ENCODE measurements at regions of chr14 and their contacts with region 1.

Region 1: DNA sequence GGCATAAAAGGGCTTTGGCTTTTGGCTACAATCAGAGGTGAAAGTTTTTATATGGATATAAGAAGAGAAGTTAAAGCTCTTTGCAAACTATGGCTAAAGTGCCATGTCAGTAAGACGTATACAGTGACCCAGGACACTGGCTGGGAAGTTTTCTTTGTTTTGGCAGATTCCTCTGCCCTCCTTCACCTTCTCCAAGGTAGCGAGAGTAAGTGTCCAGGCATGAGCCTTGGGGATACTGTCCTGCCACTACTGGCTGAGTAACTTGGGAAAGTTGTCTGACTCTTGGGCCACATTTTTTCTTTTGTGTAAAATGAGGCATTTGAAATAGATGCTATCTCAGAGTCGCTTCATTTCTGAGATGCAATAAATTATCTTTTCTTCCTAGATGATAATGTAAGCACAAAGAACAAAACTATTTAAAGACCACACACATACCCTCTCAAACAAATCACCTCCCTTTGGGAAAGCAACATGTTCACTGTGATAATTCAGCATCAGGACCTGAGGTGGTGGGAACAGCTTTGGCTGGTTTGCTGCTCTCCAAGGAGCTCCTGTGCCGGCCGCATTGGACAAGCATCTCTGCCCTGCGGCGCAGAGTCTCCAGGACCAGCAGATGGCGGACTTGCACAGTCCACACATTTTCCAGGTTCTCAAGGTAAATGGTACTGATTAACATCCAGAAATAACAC is 106.3 kb downstream of the PTCSC3 start:
- DNase-seq: no peak
- ATAC-seq: peak; percentile 92
- H3K4me3 ChIP-seq: no peak overlapping the region
- H3K27ac ChIP-seq: no peak overlapping the region
- H3K4me1 ChIP-seq: no peaks in the 10 kb centered on the region
- H3K27me3 ChIP-seq: no peaks in the 10 kb centered on the region
- CTCF ChIP-seq: peak; percentile 72 to 88 (median 80)
- EP300 ChIP-seq: no peak
- POLR2A ChIP-seq: no peak
- RAD21 ChIP-seq: peak; percentile 88

Region 2: DNA sequence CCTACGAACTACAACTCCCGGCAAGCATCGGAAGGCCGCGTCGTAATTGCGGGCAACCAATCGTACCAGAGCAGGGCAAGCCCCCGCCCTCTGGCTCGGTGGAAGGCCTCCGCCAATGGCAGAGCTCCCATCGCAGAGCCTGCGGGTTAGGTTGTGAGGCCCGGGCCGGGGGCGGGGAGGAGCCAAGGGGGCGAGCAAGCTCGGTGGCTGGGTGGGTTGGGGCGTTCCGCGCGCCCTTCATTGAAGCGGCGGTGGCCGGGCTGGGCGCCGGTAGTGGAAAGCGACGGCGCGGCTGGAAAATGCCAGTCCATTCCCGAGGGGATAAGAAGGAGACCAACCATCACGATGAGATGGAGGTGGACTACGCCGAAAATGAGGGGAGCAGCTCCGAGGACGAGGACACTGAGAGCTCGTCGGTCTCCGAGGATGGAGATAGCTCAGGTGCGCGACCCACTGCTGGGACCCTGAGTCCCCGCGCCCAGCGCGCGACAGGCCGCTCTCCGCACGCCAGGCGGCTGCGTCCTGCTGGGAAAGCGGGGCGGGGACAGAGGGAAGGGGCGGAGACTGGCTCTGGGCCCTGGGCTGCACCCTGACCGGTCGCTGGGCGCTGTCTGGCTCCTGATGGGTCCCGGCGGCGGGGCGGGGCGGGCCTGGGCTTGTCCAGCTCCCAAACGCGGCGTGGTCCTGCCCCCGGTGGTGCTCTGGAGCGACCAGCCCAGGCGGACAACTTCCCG is 243.8 kb before region 1 on chr14 and contains the start of gene BRMS1L:
- CTCF ChIA-PET with region 1: no interaction called
- POLR2A ChIA-PET with region 1: no interaction called
- RAD21 ChIA-PET with region 1: no interaction called
- SMC1A ChIA-PET with region 1: no interaction called
- in situ Hi-C with region 1: no loop called
- intact Hi-C with region 1: no loop called
- DNase-seq: peak; percentile 97
- ATAC-seq: peak; percentile 97
- H3K4me3 ChIP-seq: peak within 1 kb of the TSS; percentile 96
- H3K27ac ChIP-seq: peak within 1 kb of the TSS; percentile 84
- H3K4me1 ChIP-seq: no peaks in the 10 kb centered on the region
- H3K27me3 ChIP-seq: no peaks in the 10 kb centered on the region
- CTCF ChIP-seq: no peak
- EP300 ChIP-seq: no peak; a peak in 1 of 4 replicates
- POLR2A ChIP-seq: peak; percentile 86
- RAD21 ChIP-seq: no peak
- polyA plus RNA-seq, gene BRMS1L: 7.6 to 8.0 TPM

Region 3: DNA sequence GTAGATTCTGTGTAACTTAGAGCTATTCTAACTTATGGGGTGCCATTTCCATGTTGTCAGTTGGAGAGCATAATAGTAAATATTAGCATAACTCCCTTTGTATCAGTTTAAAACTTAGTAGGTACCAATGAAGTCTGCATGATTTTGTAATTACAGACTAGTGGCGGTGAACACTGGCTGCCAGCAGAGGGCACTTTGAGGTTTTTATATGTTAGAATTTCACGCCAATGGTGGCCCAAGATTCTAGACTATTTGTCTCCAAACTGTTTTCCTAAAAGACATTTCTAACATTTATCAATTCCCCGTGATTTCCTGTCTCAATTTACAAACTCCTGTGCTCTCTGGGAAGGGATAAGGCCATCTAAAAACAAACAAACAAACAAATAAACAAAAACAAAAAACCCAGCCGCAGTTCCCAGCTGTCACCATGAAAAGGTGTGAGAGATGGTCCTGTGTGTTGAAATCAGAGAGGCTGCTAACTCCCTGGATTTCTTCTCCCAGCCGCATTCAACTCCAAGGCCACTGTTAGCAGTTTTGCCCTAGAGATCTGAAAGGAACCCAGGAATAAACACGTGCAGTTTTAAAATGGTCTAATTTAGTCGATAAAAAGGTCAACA is 186.4 kb before region 1 on chr14:
- CTCF ChIA-PET with region 1: interaction called, 224 read pairs
- POLR2A ChIA-PET with region 1: interaction called, 4 read pairs
- RAD21 ChIA-PET with region 1: interaction called, 65 read pairs
- SMC1A ChIA-PET with region 1: interaction called, 83 read pairs
- in situ Hi-C with region 1: loop called (anchors 5 kb)
- intact Hi-C with region 1: loop called (anchors 1 kb)
- DNase-seq: no peak
- ATAC-seq: peak; percentile 76
- H3K4me3 ChIP-seq: no peak overlapping the region
- H3K27ac ChIP-seq: no peak overlapping the region
- H3K4me1 ChIP-seq: 0 out of 2 replicates have a peak, but pooled peaks cover 4% of the 10 kb centered on the region
- H3K27me3 ChIP-seq: no peaks in the 10 kb centered on the region
- CTCF ChIP-seq: peak; percentile 65 to 80 (median 72)
- EP300 ChIP-seq: no peak
- POLR2A ChIP-seq: no peak
- RAD21 ChIP-seq: peak; percentile 55; the same call in 1 of the 2 replicates

Region 4: DNA sequence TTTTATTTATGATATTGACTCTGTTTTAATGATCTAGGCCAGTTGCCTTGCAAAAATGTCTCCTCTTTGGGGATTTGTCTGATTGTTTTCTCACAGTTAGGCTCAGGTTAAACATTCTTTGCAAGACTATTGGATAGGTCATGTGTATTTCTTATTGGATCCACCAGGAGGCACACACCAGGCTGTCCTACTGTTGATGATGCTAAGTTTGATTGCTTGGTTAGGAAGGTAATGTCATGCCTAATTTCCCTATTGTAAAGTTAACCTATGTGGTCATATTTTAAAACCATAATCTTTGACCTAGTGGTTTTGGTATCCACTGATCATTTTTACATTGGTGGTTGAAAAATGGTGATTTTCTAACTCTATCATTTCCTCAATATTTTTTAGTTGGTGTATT is 107.0 kb before region 1 on chr14:
- CTCF ChIA-PET with region 1: interaction called, 24 read pairs
- POLR2A ChIA-PET with region 1: no interaction called
- RAD21 ChIA-PET with region 1: no interaction called
- SMC1A ChIA-PET with region 1: interaction called, 11 read pairs
- in situ Hi-C with region 1: no loop called
- intact Hi-C with region 1: loop called (anchors 2 kb)
- DNase-seq: no peak
- ATAC-seq: peak; percentile 78
- H3K4me3 ChIP-seq: no peak overlapping the region
- H3K27ac ChIP-seq: no peak overlapping the region
- H3K4me1 ChIP-seq: no peaks in the 10 kb centered on the region
- H3K27me3 ChIP-seq: no peaks in the 10 kb centered on the region
- CTCF ChIP-seq: peak; percentile 33 to 53 (median 33); a peak in 5 of 6 replicates
- EP300 ChIP-seq: no peak
- POLR2A ChIP-seq: no peak
- RAD21 ChIP-seq: peak; percentile 33; the same call in 1 of the 2 replicates

Region 5: GRCh38 chr14:36028218-36028617 is 42.0 kb before region 1 on chr14:
- CTCF ChIA-PET with region 1: interaction called, 11 read pairs
- POLR2A ChIA-PET with region 1: no interaction called
- RAD21 ChIA-PET with region 1: no interaction called
- SMC1A ChIA-PET with region 1: interaction called, 3 read pairs
- in situ Hi-C with region 1: no loop called
- intact Hi-C with region 1: no loop called
- DNase-seq: no peak
- ATAC-seq: peak; percentile 72
- H3K4me3 ChIP-seq: no peak overlapping the region
- H3K27ac ChIP-seq: no peak overlapping the region
- H3K4me1 ChIP-seq: no peaks in the 10 kb centered on the region
- H3K27me3 ChIP-seq: no peaks in the 10 kb centered on the region
- CTCF ChIP-seq: peak; percentile 24 to 41 (median 25); a peak in 3 of 6 replicates
- EP300 ChIP-seq: no peak
- POLR2A ChIP-seq: no peak
- RAD21 ChIP-seq: peak; percentile 61

Region 6: DNA sequence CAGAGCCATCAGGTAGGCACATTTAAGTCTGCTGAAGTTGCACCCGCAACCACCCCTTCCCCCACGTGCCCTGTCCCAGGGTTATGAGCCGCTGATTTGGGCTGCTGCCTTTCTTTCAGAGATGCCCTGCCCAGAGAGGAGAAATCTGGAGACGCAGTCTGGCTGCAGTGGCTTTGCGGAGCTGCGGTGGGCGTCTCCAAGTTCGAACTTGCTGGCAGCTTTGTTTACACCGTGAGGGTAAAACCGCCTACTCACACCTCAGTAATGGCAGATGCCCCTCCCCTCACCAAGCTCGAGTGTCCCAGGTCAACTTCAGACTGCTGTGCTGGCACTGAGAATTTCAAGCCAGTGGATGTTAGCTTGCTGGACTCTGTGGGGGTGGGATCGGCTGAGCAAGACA is 91.6 kb after region 1 on chr14:
- CTCF ChIA-PET with region 1: no interaction called
- POLR2A ChIA-PET with region 1: no interaction called
- RAD21 ChIA-PET with region 1: no interaction called
- SMC1A ChIA-PET with region 1: no interaction called
- in situ Hi-C with region 1: no loop called
- intact Hi-C with region 1: no loop called
- DNase-seq: no peak
- ATAC-seq: no peak
- H3K4me3 ChIP-seq: no peak overlapping the region
- H3K27ac ChIP-seq: no peak overlapping the region
- H3K4me1 ChIP-seq: no peaks in the 10 kb centered on the region
- H3K27me3 ChIP-seq: no peaks in the 10 kb centered on the region
- CTCF ChIP-seq: no peak
- EP300 ChIP-seq: no peak
- POLR2A ChIP-seq: no peak
- RAD21 ChIP-seq: no peak

Region 7: DNA sequence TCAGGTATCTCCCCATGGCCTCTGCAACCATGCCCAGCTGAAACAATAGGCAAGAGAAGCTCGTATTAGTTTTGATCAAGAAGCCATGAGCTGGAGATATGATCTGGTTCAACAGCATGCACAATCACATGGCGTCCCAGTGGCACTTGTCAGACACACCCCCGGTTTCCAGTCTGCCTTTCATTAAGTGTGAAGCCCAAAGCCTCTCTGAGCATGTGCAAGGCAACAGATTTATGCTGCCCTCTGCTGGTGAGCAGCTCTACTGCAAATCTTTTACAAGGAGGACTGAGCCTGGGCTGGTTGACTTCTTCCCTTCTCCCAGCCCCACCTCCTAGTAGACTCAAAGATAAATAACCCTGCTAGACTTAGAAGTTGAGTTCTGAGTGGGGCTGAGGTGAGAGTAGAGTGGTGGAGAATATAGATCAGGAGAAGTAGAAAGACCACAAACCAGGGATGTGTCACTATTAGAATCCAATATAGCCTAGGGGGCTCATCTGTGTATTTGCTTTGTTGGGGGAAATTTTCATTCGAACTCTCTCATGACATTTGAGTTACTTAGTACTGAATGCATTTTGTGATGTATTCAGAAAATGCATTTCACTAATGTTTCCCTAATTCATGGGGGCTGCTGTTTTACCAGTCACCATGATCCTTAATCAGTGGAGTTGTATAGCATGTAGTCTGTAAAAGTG is 304.0 kb after region 1 on chr14:
- CTCF ChIA-PET with region 1: interaction called, 105 read pairs
- POLR2A ChIA-PET with region 1: interaction called, 3 read pairs
- RAD21 ChIA-PET with region 1: interaction called, 44 read pairs
- SMC1A ChIA-PET with region 1: interaction called, 68 read pairs
- in situ Hi-C with region 1: loop called (anchors 5 kb)
- intact Hi-C with region 1: loop called (anchors 1 kb)
- DNase-seq: peak; percentile 30
- ATAC-seq: peak; percentile 99
- H3K4me3 ChIP-seq: no peak overlapping the region
- H3K27ac ChIP-seq: no peak overlapping the region
- H3K4me1 ChIP-seq: no peaks in the 10 kb centered on the region
- H3K27me3 ChIP-seq: no peaks in the 10 kb centered on the region
- CTCF ChIP-seq: peak; percentile 84 to 90 (median 89)
- EP300 ChIP-seq: 0 out of 4 replicates have a peak, but pooled peaks of 1 of the 2 experiments have one; percentile 36
- POLR2A ChIP-seq: no peak
- RAD21 ChIP-seq: peak; percentile 81

Region 8: DNA sequence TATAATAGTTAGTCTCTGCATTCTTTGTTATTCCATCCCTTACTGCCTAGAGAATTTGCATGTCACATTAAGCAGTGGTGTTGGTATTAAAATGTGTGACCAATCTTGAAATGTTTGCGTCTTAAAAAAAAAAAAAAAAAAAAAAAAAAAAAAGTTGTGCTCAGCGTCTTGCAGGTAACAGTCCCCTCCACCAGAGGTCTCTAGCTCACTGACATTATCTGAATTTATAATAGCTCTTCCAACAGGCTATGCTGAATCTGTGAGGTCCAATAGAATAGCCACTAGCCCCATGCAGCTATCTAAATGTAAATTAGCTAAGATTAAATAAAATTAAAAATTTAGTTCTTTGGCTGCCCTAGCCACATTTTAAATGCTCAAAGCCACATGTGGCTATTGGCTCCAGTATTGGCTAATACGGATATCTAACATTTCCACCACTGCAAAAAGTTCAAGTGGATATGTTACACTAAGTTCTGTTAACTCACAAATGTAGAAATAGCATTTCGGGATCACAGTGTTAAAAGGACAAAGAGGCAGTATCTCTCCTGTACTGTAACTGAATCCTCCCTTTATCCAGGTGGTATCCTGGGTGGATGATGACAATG is 483.6 kb after region 1 on chr14:
- CTCF ChIA-PET with region 1: interaction called, 30 read pairs
- POLR2A ChIA-PET with region 1: no interaction called
- RAD21 ChIA-PET with region 1: interaction called, 10 read pairs
- SMC1A ChIA-PET with region 1: interaction called, 9 read pairs
- in situ Hi-C with region 1: no loop called
- intact Hi-C with region 1: loop called (anchors 1 kb)
- DNase-seq: no peak
- ATAC-seq: peak; percentile 73
- H3K4me3 ChIP-seq: no peak overlapping the region
- H3K27ac ChIP-seq: no peak overlapping the region
- H3K4me1 ChIP-seq: no peaks in the 10 kb centered on the region
- H3K27me3 ChIP-seq: no peaks in the 10 kb centered on the region
- CTCF ChIP-seq: peak; percentile 48 to 71 (median 62); a peak in 5 of 6 replicates
- EP300 ChIP-seq: no peak
- POLR2A ChIP-seq: no peak
- RAD21 ChIP-seq: peak; percentile 61

Region 9: GRCh38 chr14:36973806-36974442 is 903.7 kb after region 1 on chr14:
- CTCF ChIA-PET with region 1: no interaction called
- POLR2A ChIA-PET with region 1: no interaction called
- RAD21 ChIA-PET with region 1: no interaction called
- SMC1A ChIA-PET with region 1: no interaction called
- in situ Hi-C with region 1: no loop called
- intact Hi-C with region 1: no loop called
- DNase-seq: no peak
- ATAC-seq: no peak
- H3K4me3 ChIP-seq: no peak overlapping the region
- H3K27ac ChIP-seq: no peak overlapping the region
- H3K4me1 ChIP-seq: no peaks in the 10 kb centered on the region
- H3K27me3 ChIP-seq: no peaks in the 10 kb centered on the region
- CTCF ChIP-seq: no peak
- EP300 ChIP-seq: no peak
- POLR2A ChIP-seq: no peak
- RAD21 ChIP-seq: no peak